Cardiac septum (tissue), 1 donor: ENCODE measurements at regions of chr4 and their contacts with region 1.

Region 1: DNA sequence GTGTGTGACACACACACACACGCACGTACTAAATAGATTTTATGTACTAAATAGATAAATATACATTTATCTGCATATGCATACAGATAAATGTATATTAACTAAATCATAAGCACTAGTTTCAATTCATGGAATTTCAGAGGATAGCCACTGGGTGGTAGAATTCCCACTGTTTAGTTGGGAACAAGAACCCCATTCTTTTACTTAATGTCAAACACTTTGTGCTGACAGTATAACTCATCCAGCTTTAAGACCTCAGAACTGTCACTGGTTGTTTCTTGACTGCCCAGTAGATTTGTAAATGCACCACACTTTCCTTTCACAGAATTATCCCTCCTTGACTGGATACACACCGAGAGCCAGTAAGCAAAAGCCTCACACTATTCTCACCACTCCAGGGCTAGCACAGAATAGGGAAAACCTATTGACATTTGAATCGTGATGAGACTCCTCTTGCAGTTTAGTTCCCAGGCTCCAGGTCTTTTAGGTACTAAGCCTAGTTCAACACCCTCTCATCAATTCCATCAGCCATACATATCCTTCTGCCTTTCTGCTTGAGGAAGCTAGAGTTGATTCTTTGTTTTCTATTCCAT is 32.4 kb downstream of the PPARGC1A start:
- DNase-seq: no peak

Region 2: DNA sequence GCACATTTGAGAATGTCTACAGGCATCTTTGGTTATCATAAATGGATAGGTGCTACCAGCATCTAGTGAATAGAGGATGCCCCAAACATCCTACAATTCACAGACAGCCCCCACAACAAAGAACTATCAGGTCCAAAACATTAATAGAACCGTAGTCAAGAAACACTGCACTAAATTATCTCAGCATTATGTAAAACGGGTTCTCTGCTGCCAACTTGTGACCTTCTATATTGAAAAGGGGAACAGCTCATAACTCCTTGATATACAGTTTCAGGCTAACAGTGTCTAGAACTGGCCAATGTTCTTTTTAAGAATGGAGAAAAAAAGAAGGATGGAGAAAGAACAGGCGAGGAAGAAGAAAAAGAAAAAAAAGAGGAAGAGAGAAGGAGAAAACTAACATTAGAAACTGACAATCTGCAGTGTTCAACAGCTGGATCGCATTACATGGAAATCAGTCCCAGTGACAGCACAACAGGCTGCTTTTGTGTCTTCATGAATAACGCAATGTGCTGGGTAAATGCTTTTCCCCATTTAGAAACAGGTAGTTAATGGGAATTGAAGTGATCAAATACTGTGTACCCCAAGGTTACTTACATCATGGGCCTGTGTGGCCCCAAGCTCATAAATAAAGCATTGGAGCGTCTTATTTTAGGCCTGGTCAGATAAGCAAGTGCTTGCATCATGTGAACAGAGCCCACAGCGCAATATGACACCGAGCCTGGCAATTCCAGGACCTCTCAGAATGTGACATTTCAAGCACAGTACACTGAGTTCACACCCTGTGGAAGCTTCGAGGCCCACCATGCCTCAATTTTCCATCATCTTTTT is 387.4 kb after region 1 on chr4:
- intact Hi-C with region 1: loop called (anchors 10 kb)
- DNase-seq: peak; percentile 80